Activated CD4-positive, alpha-beta T cell treated with anti-CD3 and anti-CD28 coated beads, Interleukin-2, amount 10 ng/mL, durations not matched to agents 24 days and 14 days (primary cell): ENCODE measurements at regions of chr1 and their contacts with region 1.

Region 1: DNA sequence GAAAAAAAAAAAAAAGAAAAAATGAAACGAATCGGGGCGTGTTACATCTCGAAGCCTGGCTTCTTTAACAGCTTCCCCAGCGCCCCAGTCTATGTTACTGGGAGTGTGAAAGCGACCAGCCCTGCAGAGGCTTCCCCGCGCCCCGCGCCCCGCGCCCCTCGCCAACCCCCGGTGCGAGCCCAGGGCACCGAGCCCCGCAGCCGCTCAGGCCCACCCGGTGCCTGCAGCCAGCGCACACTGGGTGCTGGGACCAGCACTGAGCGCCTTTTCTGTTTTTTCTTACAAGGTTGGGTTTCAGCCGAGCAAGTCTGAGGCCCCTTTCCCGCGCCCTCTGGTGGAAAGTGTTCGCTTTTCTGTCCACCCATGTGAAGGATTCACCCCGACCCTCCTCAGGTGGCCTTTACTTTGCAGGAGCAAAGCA is 42.1 kb upstream of the ZNF496 start:
- DNase-seq: peak; percentile 85
- H3K4me3 Mint-ChIP-seq: peak overlapping the region; percentile 55
- H3K27ac Mint-ChIP-seq: no peak overlapping the region
- H3K4me1 Mint-ChIP-seq: peaks cover 6% of the 10 kb centered on the region
- H3K27me3 Mint-ChIP-seq: peaks cover 17% of the 10 kb centered on the region

Region 2: GRCh38 chr1:247475793-247476192 is 102.1 kb after region 1 on chr1:
- intact Hi-C with region 1: no loop called
- DNase-seq: no peak
- H3K4me3 Mint-ChIP-seq: no peak overlapping the region
- H3K27ac Mint-ChIP-seq: no peak overlapping the region
- H3K4me1 Mint-ChIP-seq: no peaks in the 10 kb centered on the region
- H3K27me3 Mint-ChIP-seq: peaks cover 2% of the 10 kb centered on the region

Region 3: DNA sequence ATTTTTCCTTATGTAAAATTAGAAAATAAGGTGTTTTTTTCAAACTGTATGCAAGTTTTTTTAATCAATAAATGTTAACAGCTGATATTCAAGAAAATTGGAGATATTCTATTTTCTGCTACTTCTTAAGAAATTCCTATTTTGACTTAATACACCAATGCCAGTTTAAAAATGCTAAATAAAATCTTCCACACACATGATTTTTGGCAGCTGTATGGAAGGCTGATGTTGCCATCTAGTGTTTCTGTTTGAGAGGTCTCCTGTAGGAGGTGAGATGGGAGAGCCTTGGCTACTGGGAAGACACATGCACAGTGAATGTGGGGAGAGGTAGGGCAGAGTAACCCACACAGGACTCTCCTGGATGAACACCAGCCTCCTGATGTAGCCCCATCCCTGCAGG is 113.3 kb after region 1 on chr1:
- intact Hi-C with region 1: loop called (anchors 1 kb)
- DNase-seq: peak; percentile 78
- H3K4me3 Mint-ChIP-seq: no peak overlapping the region
- H3K27ac Mint-ChIP-seq: no peak overlapping the region
- H3K4me1 Mint-ChIP-seq: no peaks in the 10 kb centered on the region
- H3K27me3 Mint-ChIP-seq: peaks cover 7% of the 10 kb centered on the region

Region 4: GRCh38 chr1:247576495-247576894 is 202.8 kb after region 1 on chr1:
- intact Hi-C with region 1: loop called (anchors 1 kb)
- DNase-seq: no peak
- H3K4me3 Mint-ChIP-seq: no peak overlapping the region
- H3K27ac Mint-ChIP-seq: no peak overlapping the region
- H3K4me1 Mint-ChIP-seq: no peaks in the 10 kb centered on the region
- H3K27me3 Mint-ChIP-seq: no peaks in the 10 kb centered on the region